ENCODE measurements at regions of chr11 and their contacts with region 1.

Region 1: GRCh38 chr11:40388097-40388818 is 1071.2 kb downstream of the LRRC4C start:
- DNase-seq: no peak
- H3K4me3 ChIP-seq: no peak overlapping the region
- H3K27ac ChIP-seq: no peak overlapping the region
- H3K4me1 ChIP-seq: no peaks in the 10 kb centered on the region
- H3K27me3 ChIP-seq: no peaks in the 10 kb centered on the region

Region 2: DNA sequence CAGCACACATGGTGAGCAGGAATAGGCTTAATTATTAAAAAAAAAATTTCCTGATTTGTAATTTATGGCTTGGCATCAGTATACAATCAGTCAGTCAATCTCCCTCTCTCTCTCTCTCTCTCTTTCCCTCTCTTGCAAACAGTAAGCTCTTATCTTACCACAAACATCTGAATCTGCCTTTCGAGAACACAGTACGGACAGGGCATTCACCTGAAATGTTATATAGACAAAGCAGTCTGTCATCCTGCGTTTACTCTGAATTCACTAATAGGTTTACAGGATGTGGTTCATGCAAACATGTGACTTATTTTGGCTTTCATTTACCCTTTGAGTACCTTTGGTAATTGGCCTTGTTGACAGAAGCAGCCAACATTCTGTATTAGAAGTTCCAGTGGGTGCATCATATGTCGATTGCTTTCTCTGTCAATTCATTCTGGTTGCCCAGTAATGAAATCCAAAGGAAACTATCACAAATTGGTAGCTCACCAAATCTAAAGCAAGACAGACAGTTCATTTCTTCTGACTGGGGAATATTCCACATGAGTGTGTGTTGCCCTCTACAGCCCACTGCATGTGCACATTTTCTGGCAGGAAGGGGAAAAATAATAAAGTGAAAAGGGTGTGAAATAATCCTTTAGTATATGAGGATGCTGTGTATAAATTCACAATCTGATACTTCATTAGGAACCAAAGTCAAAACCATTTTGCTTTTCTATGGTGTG is 13.0 kb after region 1 on chr11:
- CTCF ChIA-PET with region 1: no interaction called
- POLR2A ChIA-PET with region 1: interaction called, 11 read pairs
- DNase-seq: no peak
- H3K4me3 ChIP-seq: no peak overlapping the region
- H3K27ac ChIP-seq: no peak overlapping the region
- H3K4me1 ChIP-seq: no peaks in the 10 kb centered on the region
- H3K27me3 ChIP-seq: no peaks in the 10 kb centered on the region

Region 3: DNA sequence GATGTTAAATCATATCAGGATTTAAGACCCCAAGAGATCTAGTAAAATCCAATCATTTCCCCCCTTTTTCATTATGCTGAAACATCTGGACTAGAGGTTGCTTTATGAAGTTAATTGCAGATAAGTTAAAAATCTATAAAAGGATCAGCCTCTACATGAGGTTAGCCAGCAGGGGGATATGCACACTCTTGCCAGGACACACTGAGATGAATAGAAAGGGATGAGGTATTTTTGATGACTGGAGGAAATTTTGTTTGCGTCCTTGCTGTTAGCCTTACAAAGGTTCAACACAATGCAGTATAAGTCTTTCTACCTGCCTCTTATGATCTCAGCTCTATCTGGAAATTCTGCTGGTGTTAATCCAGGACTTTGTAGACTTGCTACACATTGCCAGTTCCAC is 36.9 kb after region 1 on chr11:
- CTCF ChIA-PET with region 1: no interaction called
- POLR2A ChIA-PET with region 1: no interaction called
- DNase-seq: no peak
- H3K4me3 ChIP-seq: no peak overlapping the region
- H3K27ac ChIP-seq: no peak overlapping the region
- H3K4me1 ChIP-seq: no peaks in the 10 kb centered on the region
- H3K27me3 ChIP-seq: no peaks in the 10 kb centered on the region